ENCODE measurements at regions of chr11 and their contacts with region 1.

Region 1: GRCh38 chr11:84069048-84069447 is 782.9 kb upstream of the CCDC90B start:
- DNase-seq: no peak
- H3K4me3 ChIP-seq: no peak overlapping the region
- H3K27ac ChIP-seq: no peak overlapping the region
- H3K4me1 ChIP-seq: no peaks in the 10 kb centered on the region
- H3K27me3 ChIP-seq: no peaks in the 10 kb centered on the region
- CTCF ChIP-seq: no peak
- POLR2A ChIP-seq: no peak

Region 2: GRCh38 chr11:84003181-84003580 is 65.9 kb before region 1 on chr11:
- intact Hi-C with region 1: no loop called
- DNase-seq: no peak
- H3K4me3 ChIP-seq: no peak overlapping the region
- H3K27ac ChIP-seq: no peak overlapping the region
- H3K4me1 ChIP-seq: no peaks in the 10 kb centered on the region
- H3K27me3 ChIP-seq: no peaks in the 10 kb centered on the region
- CTCF ChIP-seq: no peak
- POLR2A ChIP-seq: no peak

Region 3: DNA sequence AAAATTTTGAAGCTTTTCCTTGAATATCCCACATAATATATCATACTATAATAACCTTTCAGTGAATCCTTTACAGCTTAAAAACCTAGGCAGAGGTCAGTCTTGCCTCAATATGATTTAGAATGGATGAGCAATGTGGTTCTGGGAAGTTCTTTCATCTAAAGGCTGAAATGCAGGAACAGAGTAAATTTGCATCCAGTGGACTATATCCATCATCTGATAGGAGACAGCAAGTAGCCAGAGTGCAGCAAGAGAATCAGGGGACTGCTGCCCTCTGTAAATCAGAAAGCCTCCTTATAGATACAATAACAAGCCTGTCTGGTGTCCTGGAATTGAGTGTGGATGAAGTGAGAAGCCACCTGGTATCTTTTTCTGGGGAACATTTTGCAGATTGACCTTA is 34.6 kb before region 1 on chr11:
- intact Hi-C with region 1: loop called (anchors 1 kb)
- DNase-seq: no peak
- H3K4me3 ChIP-seq: no peak overlapping the region
- H3K27ac ChIP-seq: no peak overlapping the region
- H3K4me1 ChIP-seq: no peaks in the 10 kb centered on the region
- H3K27me3 ChIP-seq: no peaks in the 10 kb centered on the region
- CTCF ChIP-seq: no peak
- POLR2A ChIP-seq: no peak

Measured in breast epithelium (tissue), 4 donors.